Ascending aorta (tissue), 2 donors: ENCODE measurements at regions of chr11 and their contacts with region 1.

Region 1: GRCh38 chr11:118834427-118835028 is 43.6 kb upstream of the DDX6 start:
- DNase-seq: no peak
- H3K4me3 ChIP-seq: no peak overlapping the region
- H3K27ac ChIP-seq: no peak overlapping the region
- H3K4me1 ChIP-seq: no peaks in the 10 kb centered on the region
- H3K27me3 ChIP-seq: no peaks in the 10 kb centered on the region
- CTCF ChIP-seq: no peak

Region 2: GRCh38 chr11:117610045-117610444 is 1224.5 kb before region 1 on chr11:
- intact Hi-C with region 1: no loop called
- DNase-seq: no peak
- H3K4me3 ChIP-seq: no peak overlapping the region
- H3K27ac ChIP-seq: no peak overlapping the region
- H3K4me1 ChIP-seq: no peaks in the 10 kb centered on the region
- H3K27me3 ChIP-seq: no peaks in the 10 kb centered on the region
- CTCF ChIP-seq: no peak

Region 3: DNA sequence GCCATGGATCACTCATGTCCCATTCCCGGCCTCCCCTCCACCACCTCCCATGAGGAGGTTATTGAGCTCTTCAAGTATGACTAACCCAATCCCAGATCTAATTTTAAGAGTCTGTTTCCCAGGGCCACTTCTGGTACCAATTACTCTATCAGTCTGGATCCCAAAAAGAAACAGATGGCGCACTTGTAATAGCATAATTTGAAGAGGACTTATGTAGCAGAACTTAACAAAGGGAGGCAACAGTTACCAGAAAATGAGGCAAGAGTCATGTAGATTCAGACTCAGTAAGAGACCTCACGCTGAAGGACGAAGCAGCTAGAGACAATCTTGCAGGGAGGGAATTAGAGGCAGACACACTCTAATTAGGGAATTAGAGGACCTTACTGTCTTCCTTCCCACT is 90.5 kb before region 1 on chr11:
- intact Hi-C with region 1: no loop called
- DNase-seq: no peak
- H3K4me3 ChIP-seq: no peak overlapping the region
- H3K27ac ChIP-seq: no peak overlapping the region
- H3K4me1 ChIP-seq: peaks cover 0 to 11% of the 10 kb centered on the region in 2 donors
- H3K27me3 ChIP-seq: no peaks in the 10 kb centered on the region
- CTCF ChIP-seq: no peak

Region 4: DNA sequence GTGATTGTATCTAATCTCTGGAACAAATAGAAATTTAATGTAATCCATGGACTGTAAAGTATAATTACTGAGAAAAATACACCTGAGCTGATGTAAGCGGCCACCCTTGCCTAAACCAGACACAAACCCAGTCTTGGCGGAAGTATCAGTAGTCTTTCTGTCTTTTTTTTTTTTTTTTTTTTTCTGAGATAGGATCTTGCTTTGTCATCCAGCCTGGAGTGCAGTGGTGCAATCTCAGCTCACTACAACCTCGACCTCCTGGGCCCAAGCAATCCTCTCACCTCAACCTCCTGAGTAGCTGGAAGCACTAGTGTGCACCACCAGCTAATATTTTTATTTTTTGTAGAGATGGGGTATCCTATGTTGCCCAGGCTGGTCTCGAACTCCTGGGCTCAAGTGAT is 43.6 kb after region 1 on chr11:
- intact Hi-C with region 1: loop called (anchors 5 kb)
- DNase-seq: no peak
- H3K4me3 ChIP-seq: no peak overlapping the region
- H3K27ac ChIP-seq: no peak overlapping the region
- H3K4me1 ChIP-seq: peaks cover 0 to 5% of the 10 kb centered on the region in 2 donors
- H3K27me3 ChIP-seq: no peaks in the 10 kb centered on the region
- CTCF ChIP-seq: no peak